Motor neuron (in vitro differentiated cells): ENCODE measurements at regions of chr6 and their contacts with region 1.

Region 1: DNA sequence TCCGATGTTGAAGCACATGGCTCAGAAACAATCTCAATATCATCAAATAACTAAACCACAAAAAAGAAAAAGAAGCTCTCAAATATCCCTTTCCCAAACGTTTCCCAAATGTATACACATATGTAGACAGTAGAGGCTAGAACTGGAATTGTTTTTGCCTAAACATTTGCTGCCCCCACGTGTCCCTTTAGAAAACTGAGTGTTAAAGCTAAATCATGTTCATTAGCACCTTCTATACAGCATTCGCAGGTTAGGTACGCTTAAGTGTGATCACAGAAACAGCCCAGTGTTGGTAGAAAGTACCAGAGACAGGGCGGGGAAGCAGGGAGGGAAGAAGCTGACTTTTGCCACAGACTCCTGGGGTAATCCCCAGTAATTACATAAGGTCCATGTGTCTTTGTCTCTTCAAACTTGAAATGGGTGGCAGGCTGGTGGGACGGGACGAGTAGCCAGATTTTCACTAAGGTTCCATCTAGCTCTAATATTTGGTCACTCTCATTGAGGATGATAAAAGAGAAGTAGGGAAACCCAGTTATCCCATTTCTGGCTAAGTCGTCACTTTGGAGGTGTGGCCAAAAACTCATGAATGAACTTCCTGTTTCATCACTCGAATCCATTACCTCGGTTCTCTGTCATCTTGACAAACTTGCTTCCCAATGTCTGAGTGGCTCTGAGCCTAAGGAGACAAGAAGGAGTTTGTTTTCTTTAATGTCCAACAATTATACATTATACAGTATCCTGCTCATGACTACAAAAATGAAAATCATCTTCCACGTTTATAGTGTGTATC is 15.0 kb upstream of the TFAP2A start:
- ATAC-seq: peak; percentile 38 to 68 (median 49)
- H3K4me3 ChIP-seq: no peak overlapping the region
- H3K27ac ChIP-seq: no peak overlapping the region
- H3K4me1 ChIP-seq: peaks cover 7 to 11% of the 10 kb centered on the region in 2 donors

Region 2: GRCh38 chr6:8506123-8506522 is 1923.7 kb before region 1 on chr6:
- in situ Hi-C with region 1: loop called in 1 of 9 experiments (anchors 25 kb)
- ATAC-seq: no peak
- H3K4me3 ChIP-seq: no peak overlapping the region
- H3K27ac ChIP-seq: no peak overlapping the region
- H3K4me1 ChIP-seq: no peaks in the 10 kb centered on the region

Region 3: DNA sequence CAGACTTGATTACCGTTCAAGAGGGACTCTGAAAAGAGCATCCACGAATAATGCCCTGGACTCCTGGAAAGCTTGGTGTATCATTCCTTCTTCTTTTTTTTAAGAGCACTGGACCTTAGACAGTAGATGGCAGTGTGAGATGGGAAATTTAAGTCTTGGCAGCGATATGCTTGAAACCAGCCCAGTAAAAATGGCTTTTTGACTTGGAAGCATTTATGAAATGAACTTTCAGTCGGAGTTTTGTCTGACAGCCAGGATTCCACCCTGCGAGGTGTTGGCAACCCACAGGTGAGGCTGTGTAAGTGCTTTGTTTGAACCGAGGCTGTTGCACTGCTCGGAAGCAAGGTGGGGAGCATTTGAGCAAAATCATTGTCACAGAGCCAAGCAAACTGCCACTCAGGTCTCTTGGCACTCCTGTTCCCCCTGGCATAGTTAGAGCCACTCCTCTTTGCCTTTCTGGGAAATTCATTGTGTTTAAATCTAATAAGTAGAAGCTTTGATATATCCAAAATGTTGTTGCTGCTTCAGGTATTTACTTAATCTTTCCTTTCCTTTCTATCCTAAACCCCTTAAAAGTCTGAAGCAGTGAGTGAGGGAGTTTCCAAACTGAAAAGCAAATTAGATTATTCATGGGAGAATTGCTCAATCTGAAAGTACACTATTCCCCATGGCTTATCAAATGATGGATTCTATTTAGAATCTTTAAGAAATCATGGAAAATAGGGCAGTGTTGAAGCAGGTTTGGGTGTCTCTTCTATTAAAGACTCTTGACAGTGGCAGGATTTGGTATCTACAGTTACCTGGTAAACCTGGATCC is 1721.7 kb before region 1 on chr6:
- in situ Hi-C with region 1: loop called in 1 of 9 experiments (anchors 25 kb)
- ATAC-seq: peak in 4 of 8 experiments; percentile 54 to 75 (median 75)
- H3K4me3 ChIP-seq: no peak overlapping the region
- H3K27ac ChIP-seq: no peak overlapping the region
- H3K4me1 ChIP-seq: no peaks in the 10 kb centered on the region

Region 4: DNA sequence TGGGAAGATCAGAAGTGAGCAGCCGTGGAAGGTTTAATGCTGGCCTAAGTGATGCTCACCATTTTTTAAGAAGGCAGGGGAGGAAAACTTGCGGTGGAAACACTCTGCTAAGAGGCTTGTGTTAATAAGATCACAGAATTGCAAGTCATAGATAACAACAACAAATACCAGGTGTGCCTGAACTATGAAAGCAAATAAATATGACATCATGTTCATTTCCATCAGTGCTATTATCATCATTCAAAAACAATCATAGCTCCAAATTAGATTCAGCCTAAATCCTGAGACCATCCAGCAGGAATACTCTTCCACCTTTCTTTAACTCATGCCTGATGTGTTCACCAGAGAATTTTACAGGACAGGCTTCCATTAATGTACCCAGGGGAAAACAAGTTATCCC is 656.9 kb before region 1 on chr6:
- in situ Hi-C with region 1: no loop called
- ATAC-seq: no peak
- H3K4me3 ChIP-seq: no peak overlapping the region
- H3K27ac ChIP-seq: no peak overlapping the region
- H3K4me1 ChIP-seq: no peaks in the 10 kb centered on the region

Region 5: DNA sequence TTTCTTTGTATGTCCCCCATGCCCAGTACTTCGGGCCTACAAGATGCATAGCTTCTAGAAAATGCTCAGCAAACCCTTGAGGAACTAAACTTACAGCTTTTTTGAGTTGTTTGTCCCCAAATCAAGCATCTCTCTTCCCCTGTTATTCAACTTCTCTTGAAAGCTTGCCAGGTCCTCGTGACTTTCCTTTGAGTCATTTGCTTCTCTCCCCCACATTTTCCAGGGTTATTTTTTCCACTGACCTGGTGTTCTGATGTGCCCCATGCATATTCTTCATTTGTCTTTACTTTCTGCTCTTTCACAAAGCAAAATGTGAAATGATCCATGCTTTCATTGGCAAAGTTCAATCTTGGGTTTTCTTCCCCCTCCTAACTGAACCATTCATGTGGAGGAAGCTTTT is 219.8 kb before region 1 on chr6:
- in situ Hi-C with region 1: no loop called
- ATAC-seq: no peak
- H3K4me3 ChIP-seq: no peak overlapping the region
- H3K27ac ChIP-seq: no peak overlapping the region
- H3K4me1 ChIP-seq: peaks cover 0 to 4% of the 10 kb centered on the region in 2 donors

Region 6: GRCh38 chr6:10759312-10759839 is 329.5 kb after region 1 on chr6:
- in situ Hi-C with region 1: no loop called
- ATAC-seq: peak; percentile 24 to 97 (median 50)
- H3K4me3 ChIP-seq: no peak overlapping the region
- H3K27ac ChIP-seq: no peak overlapping the region
- H3K4me1 ChIP-seq: peaks cover 0 to 2% of the 10 kb centered on the region in 2 donors

Region 7: DNA sequence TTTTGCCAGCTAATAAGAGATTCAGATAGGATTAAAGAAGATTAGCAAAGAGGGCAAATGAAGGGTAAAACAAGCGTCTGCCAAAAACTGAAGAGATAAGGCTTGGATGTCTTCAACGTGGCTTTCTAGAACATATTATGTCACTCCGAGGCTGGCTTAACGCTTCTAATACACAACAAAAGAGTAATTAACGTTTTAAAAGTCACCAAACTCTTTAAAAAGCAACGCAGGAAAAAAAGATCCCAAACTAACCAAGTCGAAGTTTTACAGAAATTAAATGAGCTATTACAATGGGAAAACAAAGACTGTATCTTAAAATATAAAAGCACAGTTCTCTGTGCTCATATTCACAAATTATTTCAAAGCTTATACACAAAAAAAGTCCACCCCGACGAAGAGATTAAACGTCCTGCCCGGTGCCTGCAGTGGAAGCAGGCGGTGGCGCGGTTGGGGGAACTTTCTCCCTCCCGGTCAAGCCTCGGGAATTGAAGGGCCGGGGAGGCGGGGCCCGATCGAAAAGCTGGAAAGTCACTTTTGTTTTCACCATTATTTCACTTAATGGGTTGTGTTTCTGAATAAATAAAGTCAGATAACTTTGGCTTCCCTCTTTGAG is 407.3 kb after region 1 on chr6:
- in situ Hi-C with region 1: no loop called
- ATAC-seq: no peak
- H3K4me3 ChIP-seq: peak overlapping the region; percentile 41 to 63 (median 56)
- H3K27ac ChIP-seq: no peak overlapping the region
- H3K4me1 ChIP-seq: peaks cover 0 to 7% of the 10 kb centered on the region in 2 donors